Dendritic cell treated with granulocyte-macrophage colony-stimulating factor and Interleukin-4, amounts not matched to agents 40 ng/mL and 50 ng/mL, for 4 days (primary cell): ENCODE measurements at regions of chr17 and their contacts with region 1.

Region 1: GRCh38 chr17:69335058-69335457 is 8.1 kb upstream of the ABCA5 start:
- H3K4me3 Mint-ChIP-seq: no peak overlapping the region
- H3K27ac Mint-ChIP-seq: no peak overlapping the region
- H3K4me1 Mint-ChIP-seq: no peaks in the 10 kb centered on the region
- H3K27me3 Mint-ChIP-seq: peaks cover 4% of the 10 kb centered on the region

Region 2: GRCh38 chr17:69388822-69389442 is 53.9 kb after region 1 on chr17:
- intact Hi-C with region 1: loop called (anchors 2 kb)
- H3K4me3 Mint-ChIP-seq: no peak overlapping the region
- H3K27ac Mint-ChIP-seq: no peak overlapping the region
- H3K4me1 Mint-ChIP-seq: peaks cover 5% of the 10 kb centered on the region
- H3K27me3 Mint-ChIP-seq: peaks cover 19% of the 10 kb centered on the region

Region 3: DNA sequence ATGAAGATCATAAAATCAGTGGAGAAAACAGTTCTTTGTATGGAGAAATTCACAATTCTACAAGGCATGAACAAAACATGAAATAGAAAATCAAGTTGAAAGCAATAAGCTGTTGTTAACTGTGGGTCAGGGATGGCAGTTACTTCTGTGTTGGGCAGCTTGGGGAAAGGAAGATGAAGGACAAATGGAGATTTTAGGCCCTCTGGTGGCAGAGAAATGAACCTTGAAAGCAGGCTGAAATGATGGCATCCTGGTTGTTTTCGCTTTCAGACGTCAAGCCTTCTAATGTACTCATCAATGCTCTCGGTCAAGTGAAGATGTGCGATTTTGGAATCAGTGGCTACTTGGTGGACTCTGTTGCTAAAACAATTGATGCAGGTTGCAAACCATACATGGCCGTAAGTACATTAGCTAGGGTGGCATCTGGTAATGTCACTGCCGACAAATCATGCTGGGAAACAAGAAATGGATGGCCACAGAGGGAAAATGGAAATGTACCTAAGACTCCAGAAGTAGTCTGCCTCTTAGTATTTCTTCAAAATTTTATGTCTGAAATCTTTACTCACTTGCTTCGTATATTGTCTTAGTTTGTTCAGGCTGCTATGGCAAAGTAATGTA is 188.3 kb after region 1 on chr17:
- intact Hi-C with region 1: loop called (anchors 10 kb)
- H3K4me3 Mint-ChIP-seq: no peak overlapping the region
- H3K27ac Mint-ChIP-seq: no peak overlapping the region
- H3K4me1 Mint-ChIP-seq: no peaks in the 10 kb centered on the region
- H3K27me3 Mint-ChIP-seq: no peaks in the 10 kb centered on the region